ENCODE measurements at regions of chr16 and their contacts with region 1.

Region 1: GRCh38 chr16:13957197-13958078 is 37.5 kb downstream of the ERCC4 start:
- DNase-seq: peak; percentile 67 to 80
- ATAC-seq: peak; percentile 82 to 93 (median 88)
- H3K4me3 ChIP-seq: peak overlapping the region; percentile 31
- H3K27ac ChIP-seq: peak overlapping the region; percentile 72
- H3K4me1 ChIP-seq: peaks cover 18% of the 10 kb centered on the region
- H3K27me3 ChIP-seq: no peaks in the 10 kb centered on the region
- CTCF ChIP-seq: no peak

Region 2: GRCh38 chr16:14003074-14003570 is 45.7 kb after region 1 on chr16:
- intact Hi-C with region 1: loop called in 1 of 2 experiments (anchors 5 kb)
- DNase-seq: peak; percentile 65 to 74
- ATAC-seq: peak; percentile 62 to 83 (median 80)
- H3K4me3 ChIP-seq: peak overlapping the region; percentile 57
- H3K27ac ChIP-seq: peak overlapping the region; percentile 69
- H3K4me1 ChIP-seq: peaks cover 46% of the 10 kb centered on the region
- H3K27me3 ChIP-seq: no peaks in the 10 kb centered on the region
- CTCF ChIP-seq: no peak

Region 3: GRCh38 chr16:14024300-14024699 is 66.9 kb after region 1 on chr16:
- intact Hi-C with region 1: no loop called
- DNase-seq: no peak
- ATAC-seq: peak in 3 of 4 donors; percentile 60 to 83 (median 66)
- H3K4me3 ChIP-seq: no peak overlapping the region
- H3K27ac ChIP-seq: peak overlapping the region; percentile 48
- H3K4me1 ChIP-seq: peaks cover 29% of the 10 kb centered on the region
- H3K27me3 ChIP-seq: no peaks in the 10 kb centered on the region
- CTCF ChIP-seq: no peak

Measured in psoas muscle (tissue), 8 donors.